ENCODE measurements at regions of chr1 and their contacts with region 1.

Region 1: DNA sequence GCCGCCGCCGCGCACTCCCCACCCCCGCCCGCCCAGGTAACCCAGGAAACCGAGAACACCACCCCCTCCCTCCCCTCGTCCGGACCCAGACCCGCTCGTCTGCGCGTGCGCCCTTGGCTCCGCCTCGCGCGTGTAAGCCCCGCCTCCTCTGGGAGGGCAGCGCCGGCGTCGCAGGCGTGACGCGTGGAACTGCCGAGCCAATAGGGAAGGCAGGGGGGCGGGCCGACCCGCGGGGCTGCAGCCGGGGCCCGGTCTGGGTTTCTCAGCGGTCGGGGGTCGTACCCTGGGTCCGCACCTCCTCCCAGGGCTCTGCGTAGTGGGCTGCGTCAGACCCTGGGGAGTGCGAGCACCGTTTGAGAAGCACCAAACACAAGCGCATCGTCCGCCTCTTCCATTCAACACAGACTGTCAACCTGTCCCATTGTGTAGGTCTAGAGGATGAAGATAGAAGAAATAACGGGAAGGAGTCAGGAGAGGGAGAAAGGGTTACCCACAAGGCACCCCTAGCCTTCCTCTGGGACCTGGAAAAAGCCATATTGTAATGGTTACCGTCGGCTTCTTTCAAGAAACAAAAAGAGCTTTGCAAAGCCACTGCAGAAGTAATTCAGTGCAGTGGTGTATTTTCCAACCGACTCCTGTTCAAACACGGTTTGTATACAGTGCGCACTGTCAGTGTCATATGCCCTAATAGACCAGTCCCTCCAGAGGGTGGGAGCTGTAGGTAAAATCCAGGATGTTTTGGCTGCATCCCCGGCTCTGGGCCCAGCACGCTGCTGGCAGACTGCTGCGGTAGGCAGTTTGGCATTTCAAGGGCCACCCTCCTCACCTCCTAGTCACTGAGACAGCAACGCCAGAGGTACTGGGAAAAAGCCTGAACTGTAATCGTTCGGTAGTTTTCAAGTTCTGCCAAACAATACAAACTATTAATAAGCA is 473 bp upstream of the LYST start:
- DNase-seq: peak; percentile 99
- H3K4me3 Mint-ChIP-seq: peak overlapping the region; percentile 98
- H3K27ac Mint-ChIP-seq: peak overlapping the region; percentile 98
- H3K4me1 Mint-ChIP-seq: peaks cover 57% of the 10 kb centered on the region
- H3K27me3 Mint-ChIP-seq: no peaks in the 10 kb centered on the region

Region 2: DNA sequence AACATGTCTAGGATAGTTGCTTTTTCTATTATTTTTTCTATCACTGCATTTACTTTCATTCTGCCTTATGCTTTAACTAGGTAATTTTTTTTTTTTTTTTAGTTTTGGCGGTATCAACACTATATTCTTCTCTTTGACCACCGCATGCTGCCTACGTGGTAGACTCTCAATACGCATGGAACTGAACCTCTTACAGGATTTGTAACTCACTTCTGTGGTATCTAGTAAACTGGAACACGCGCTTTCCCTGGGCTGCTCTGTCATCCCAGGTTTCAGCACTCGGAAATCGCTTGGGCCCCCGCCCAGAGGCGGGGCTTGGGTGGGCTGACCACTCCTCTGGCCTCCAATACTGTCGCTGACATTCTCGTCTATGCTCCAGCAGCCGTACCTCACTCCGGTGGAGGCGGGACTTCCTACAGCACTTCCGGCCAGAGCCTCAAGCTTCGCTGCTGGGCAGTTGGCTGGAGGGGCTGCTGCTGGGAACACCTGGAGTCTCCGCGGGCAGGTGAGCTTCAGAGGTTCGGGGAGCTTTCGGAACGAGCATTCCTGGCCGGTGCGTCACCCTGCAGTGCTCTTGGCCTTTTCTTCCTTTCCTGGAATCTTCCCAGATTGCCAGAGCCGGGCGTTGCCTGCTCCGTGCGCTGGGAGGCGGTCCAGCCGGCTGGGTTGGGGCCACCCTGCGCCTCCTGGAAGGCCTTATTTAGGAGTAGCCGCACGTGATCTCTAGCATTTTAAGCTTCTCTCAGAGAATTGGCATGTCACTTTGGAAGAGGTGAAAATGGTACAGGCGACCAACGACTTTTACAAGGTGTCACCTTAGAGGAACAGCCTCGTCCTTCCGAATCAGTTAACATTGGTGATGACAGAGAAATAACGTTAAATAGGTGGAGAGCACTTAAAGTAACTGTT is 499.9 kb before region 1 on chr1 and contains the start of gene TBCE:
- intact Hi-C with region 1: loop called (anchors 2 kb)
- DNase-seq: peak; percentile 87
- H3K4me3 Mint-ChIP-seq: peak within 1 kb of the TSS; percentile 95
- H3K27ac Mint-ChIP-seq: peak within 1 kb of the TSS; percentile 93
- H3K4me1 Mint-ChIP-seq: peaks cover 34% of the 10 kb centered on the region
- H3K27me3 Mint-ChIP-seq: no peaks in the 10 kb centered on the region
- total RNA-seq, gene TBCE: 29.0 and 29.2 TPM in 2 replicates

Region 3: GRCh38 chr1:235642011-235642942 is 224.9 kb before region 1 on chr1:
- intact Hi-C with region 1: loop called (anchors 2 kb)
- DNase-seq: peak; percentile 76
- H3K4me3 Mint-ChIP-seq: peak overlapping the region; percentile 67
- H3K27ac Mint-ChIP-seq: peak overlapping the region; percentile 92
- H3K4me1 Mint-ChIP-seq: peaks cover 71% of the 10 kb centered on the region
- H3K27me3 Mint-ChIP-seq: peaks cover 17% of the 10 kb centered on the region

Region 4: GRCh38 chr1:235697508-235697907 is 169.7 kb before region 1 on chr1:
- intact Hi-C with region 1: loop called (anchors 5 kb)
- DNase-seq: no peak
- H3K4me3 Mint-ChIP-seq: no peak overlapping the region
- H3K27ac Mint-ChIP-seq: peak overlapping the region; percentile 91
- H3K4me1 Mint-ChIP-seq: peaks cover 20% of the 10 kb centered on the region
- H3K27me3 Mint-ChIP-seq: no peaks in the 10 kb centered on the region

Region 5: GRCh38 chr1:235855811-235856429 is 11.3 kb before region 1 on chr1:
- intact Hi-C with region 1: loop called (anchors 1 kb)
- DNase-seq: no peak
- H3K4me3 Mint-ChIP-seq: no peak overlapping the region
- H3K27ac Mint-ChIP-seq: peak overlapping the region; percentile 37
- H3K4me1 Mint-ChIP-seq: peaks cover 41% of the 10 kb centered on the region
- H3K27me3 Mint-ChIP-seq: no peaks in the 10 kb centered on the region

Region 6: DNA sequence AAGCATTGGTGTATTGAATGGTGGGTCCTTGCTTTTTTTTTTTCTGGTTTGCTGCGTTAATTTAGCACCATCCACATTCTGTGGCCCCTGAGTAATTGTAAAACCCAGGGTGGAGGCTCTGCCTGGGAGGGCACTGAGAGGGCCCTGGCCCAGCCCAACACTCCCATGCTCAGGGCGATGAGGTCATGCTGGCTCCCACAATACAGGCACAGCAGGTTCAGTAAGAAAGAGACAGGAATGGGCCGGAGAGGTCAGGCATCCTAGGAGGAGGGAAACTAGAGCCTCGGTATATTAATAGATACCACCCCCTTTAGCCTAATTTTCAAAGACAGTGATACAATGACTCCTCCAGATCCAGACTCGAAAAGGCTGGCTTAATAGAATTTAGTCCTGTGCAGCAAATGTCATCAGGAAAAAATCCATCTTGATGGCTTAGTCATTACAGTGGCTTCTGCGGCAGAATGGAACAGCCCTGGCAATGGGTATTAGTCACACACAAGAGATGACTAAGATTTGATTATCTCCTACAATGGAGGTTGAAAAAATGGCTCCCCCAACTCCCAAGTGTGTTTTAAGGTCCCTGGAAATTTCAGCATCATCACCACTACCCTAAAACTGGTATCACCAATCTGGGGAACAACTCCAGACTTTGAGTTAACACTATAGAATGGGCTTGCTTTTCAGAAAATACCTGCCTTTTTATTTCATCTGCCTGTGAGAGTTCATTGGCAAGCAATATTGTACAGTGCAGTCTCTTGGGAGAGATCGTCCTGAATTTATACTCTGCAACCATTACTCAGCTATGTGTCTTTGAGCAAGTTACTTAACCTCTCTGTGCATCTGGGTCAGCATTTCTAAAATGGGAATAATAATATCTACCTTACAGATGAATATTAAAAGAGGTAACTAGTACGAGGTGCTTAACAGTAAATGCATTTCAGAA is 43.4 kb after region 1 on chr1:
- intact Hi-C with region 1: loop called (anchors 1 kb)
- DNase-seq: no peak
- H3K4me3 Mint-ChIP-seq: peak overlapping the region; percentile 41
- H3K27ac Mint-ChIP-seq: peak overlapping the region; percentile 60
- H3K4me1 Mint-ChIP-seq: peaks cover 37% of the 10 kb centered on the region
- H3K27me3 Mint-ChIP-seq: no peaks in the 10 kb centered on the region

Region 7: GRCh38 chr1:235952950-235953615 is 85.9 kb after region 1 on chr1:
- intact Hi-C with region 1: loop called (anchors 1 kb)
- DNase-seq: peak; percentile 36
- H3K4me3 Mint-ChIP-seq: peak overlapping the region; percentile 19
- H3K27ac Mint-ChIP-seq: peak overlapping the region; percentile 40
- H3K4me1 Mint-ChIP-seq: peaks cover 34% of the 10 kb centered on the region
- H3K27me3 Mint-ChIP-seq: peaks cover 30% of the 10 kb centered on the region

Measured in activated T-helper 1 cell treated with anti-CD3 and anti-CD28 coated beads, Interleukin-12 subunit alpha, Interleukin-12 subunit beta, Interleukin-2, Interleukin-4 antibody, amounts not matched to agents 30 ng/mL and 10 ng/mL and 1 ng/mL, durations not matched to agents 14 hours and 24 hours and 36 hours (primary cell).